ENCODE measurements at regions of chr16 and their contacts with region 1.

Region 1: DNA sequence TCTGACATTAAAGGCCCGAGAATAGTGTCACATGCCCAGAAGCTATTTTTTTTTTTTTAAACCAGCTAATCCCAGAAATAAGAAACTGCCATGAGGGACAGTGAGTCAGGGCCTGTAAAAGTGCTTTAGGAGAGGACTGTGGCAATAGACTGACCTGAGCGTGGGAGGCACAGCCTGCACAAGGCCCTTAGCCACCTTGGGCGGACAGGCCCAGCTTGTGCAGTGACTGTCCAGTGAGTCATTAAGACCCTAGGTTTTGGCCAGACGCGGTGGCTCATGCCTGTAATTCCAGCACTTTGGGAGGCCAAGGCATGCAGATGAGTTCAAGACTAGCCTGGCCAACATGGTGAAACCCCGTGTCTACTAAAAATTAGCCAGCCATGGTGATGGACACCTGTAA is 343.0 kb upstream of the ZFHX3 start:
- DNase-seq: peak; percentile 31
- ATAC-seq: no peak
- H3K4me3 ChIP-seq: no peak overlapping the region
- H3K27ac ChIP-seq: no peak overlapping the region
- H3K4me1 ChIP-seq: no peaks in the 10 kb centered on the region
- H3K27me3 ChIP-seq: no peaks in the 10 kb centered on the region
- CTCF ChIP-seq: no peak
- POLR2A ChIP-seq: no peak
- RAD21 ChIP-seq: no peak

Region 2: GRCh38 chr16:73347500-73348375 is 43.2 kb before region 1 on chr16:
- CTCF ChIA-PET with region 1: no interaction called
- POLR2A ChIA-PET with region 1: no interaction called
- dilution Hi-C with region 1: no loop called
- in situ Hi-C with region 1: no loop called
- intact Hi-C with region 1: no loop called
- DNase-seq: no peak
- ATAC-seq: no peak
- H3K4me3 ChIP-seq: no peak overlapping the region
- H3K27ac ChIP-seq: no peak overlapping the region
- H3K4me1 ChIP-seq: no peaks in the 10 kb centered on the region
- H3K27me3 ChIP-seq: peaks cover under 1% of the 10 kb centered on the region; the same call in 1 of the 2 replicates
- CTCF ChIP-seq: no peak
- POLR2A ChIP-seq: no peak
- RAD21 ChIP-seq: no peak

Region 3: GRCh38 chr16:73447850-73448249 is 56.9 kb after region 1 on chr16:
- CTCF ChIA-PET with region 1: interaction called, 12 read pairs
- POLR2A ChIA-PET with region 1: no interaction called
- dilution Hi-C with region 1: no loop called
- in situ Hi-C with region 1: no loop called
- intact Hi-C with region 1: no loop called
- DNase-seq: no peak
- ATAC-seq: no peak
- H3K4me3 ChIP-seq: no peak overlapping the region
- H3K27ac ChIP-seq: no peak overlapping the region
- H3K4me1 ChIP-seq: no peaks in the 10 kb centered on the region
- H3K27me3 ChIP-seq: no peaks in the 10 kb centered on the region
- CTCF ChIP-seq: no peak
- POLR2A ChIP-seq: no peak
- RAD21 ChIP-seq: no peak

Measured in IMR-90 (cell line).